ENCODE measurements at regions of chr1 and their contacts with region 1.

Region 1: DNA sequence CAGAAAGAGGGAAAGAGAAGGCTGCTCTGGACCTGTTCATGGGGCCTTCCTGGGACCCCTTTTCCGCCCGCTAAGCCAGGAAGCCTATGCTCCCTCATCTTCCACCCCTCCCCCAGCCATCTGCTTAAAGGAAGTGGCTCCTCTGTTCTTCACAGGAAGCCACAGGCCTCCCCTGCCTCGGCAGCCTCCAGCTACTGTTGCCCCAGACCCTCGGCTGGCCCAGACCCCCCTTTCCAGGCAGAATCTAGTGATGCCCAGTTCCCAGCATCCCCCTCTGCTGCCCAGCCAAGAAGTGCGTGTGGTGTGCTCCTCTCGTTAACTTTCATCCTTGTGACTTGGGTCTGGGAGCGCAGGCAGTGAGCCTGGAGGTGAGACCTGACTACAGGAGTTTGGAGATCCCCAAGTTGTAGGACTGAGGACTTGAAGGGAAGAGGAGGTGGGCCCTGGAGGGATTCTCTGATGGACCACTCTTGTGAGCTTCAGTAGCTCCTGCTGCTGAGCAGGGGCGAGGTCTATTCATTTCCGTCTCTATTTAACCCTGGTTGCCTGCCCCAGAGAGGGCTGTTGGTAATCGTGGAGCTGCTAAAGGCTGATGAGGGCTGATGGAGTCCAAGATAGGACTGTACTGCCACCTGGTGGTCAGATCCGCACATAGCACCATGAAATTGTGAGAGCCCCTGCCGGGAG is 9.1 kb downstream of the IFI6 start:
- DNase-seq: peak; percentile 86 to 95
- ATAC-seq: peak; percentile 85
- H3K4me3 ChIP-seq: no peak overlapping the region
- H3K27ac ChIP-seq: no peak overlapping the region
- H3K4me1 ChIP-seq: no peaks in the 10 kb centered on the region
- H3K27me3 ChIP-seq: no peaks in the 10 kb centered on the region

Region 2: DNA sequence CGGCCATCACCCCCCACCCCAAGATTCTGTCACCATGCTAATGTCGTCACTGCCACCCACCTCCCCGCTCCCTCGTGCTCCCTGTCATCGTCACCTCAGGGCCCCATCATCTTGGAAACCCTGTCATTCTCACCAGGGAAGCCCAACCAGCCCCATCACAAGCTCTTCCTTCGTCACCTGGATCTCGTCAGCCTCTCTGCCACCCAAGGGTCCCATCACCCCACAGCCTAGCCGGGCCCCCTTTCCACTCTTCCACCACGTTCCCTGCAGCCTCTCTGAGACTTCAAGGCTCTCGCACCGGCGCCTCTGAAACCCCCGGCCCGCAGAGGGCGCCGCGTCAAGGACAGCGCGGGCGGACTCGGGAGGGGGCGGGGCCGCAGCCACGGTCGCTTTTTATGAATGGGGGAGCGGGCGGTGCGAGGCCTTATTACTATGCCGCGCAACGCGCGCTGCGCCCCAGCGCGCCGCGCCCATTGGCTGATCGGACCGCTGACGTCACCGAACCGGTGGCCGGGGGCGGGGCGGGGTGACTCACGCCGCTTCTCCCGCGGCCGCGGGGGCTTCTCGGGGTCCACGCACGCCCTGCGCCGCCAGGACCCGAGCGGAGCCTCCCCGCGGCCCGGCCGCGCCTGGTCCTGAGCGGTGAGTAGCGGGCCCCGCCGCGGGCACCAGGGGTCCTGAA is 270.6 kb before region 1 on chr1 and contains the start of gene GPR3:
- intact Hi-C with region 1: loop called in 1 of 2 experiments (anchors 10 kb)
- DNase-seq: peak; percentile 92 to 97
- ATAC-seq: peak; percentile 93
- H3K4me3 ChIP-seq: no peak within 1 kb of the TSS
- H3K27ac ChIP-seq: no peak within 1 kb of the TSS
- H3K4me1 ChIP-seq: no peaks in the 10 kb centered on the region
- H3K27me3 ChIP-seq: no peaks in the 10 kb centered on the region
- total RNA-seq, gene GPR3: 0.68 to 0.93 TPM

Region 3: DNA sequence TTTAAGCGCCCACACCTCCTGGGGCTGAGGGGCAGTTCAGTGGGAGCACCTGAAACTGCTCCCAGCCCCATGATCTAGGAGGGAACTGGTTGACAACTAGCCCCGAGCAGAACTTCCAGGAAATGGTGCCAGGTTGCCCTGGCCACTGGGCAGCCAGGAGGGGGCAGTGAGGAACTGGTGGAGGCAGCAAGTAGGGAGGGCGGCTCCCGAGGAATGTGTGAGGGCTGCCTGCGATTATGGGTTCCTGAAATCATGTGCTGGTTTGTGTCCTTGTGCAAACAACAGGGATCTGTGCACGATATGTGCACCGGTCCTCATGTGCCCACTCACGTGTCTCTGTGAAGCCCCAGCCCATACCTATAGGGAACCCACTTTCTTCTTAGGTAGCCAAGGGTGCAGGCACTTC is 260.5 kb before region 1 on chr1:
- intact Hi-C with region 1: loop called (anchors 5 to 10 kb)
- DNase-seq: peak; percentile 87 to 92
- ATAC-seq: peak; percentile 74
- H3K4me3 ChIP-seq: no peak overlapping the region
- H3K27ac ChIP-seq: peak overlapping the region; percentile 49 to 71
- H3K4me1 ChIP-seq: no peaks in the 10 kb centered on the region
- H3K27me3 ChIP-seq: no peaks in the 10 kb centered on the region

Region 4: DNA sequence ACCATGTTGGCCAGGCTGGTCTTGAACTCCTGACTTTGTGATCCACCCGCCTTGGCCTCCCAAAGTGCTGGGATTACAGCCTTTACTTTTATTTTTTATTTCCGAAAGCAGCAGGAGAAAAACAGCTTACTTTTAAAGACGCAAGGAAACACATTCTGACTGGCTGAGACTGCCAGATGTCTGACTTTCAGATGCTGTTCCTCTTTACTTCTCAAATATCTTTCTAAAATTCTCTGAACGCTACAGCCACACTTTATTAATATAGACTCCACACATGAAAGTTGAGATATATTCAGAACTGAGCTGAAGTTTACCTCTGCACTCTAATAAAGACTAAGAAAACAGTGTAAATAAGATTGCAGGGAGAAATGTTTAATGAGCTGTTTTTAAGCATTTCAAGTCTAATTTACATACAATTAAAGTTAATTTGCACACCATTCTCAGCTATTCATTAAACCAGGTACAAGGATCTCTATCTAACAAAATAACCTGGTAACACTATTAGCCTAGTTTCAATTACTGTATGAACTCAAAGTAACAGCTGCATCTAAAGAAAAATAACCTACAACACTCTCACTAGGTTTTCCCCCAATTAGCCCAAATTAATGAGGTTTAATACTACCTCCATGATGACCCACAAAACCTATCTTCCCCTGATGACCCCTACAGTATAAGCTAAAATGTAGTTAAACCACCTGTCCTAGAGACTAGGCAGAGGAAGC is 197.8 kb before region 1 on chr1:
- intact Hi-C with region 1: no loop called
- DNase-seq: no peak
- ATAC-seq: no peak
- H3K4me3 ChIP-seq: no peak overlapping the region
- H3K27ac ChIP-seq: no peak overlapping the region
- H3K4me1 ChIP-seq: no peaks in the 10 kb centered on the region
- H3K27me3 ChIP-seq: no peaks in the 10 kb centered on the region

Region 5: DNA sequence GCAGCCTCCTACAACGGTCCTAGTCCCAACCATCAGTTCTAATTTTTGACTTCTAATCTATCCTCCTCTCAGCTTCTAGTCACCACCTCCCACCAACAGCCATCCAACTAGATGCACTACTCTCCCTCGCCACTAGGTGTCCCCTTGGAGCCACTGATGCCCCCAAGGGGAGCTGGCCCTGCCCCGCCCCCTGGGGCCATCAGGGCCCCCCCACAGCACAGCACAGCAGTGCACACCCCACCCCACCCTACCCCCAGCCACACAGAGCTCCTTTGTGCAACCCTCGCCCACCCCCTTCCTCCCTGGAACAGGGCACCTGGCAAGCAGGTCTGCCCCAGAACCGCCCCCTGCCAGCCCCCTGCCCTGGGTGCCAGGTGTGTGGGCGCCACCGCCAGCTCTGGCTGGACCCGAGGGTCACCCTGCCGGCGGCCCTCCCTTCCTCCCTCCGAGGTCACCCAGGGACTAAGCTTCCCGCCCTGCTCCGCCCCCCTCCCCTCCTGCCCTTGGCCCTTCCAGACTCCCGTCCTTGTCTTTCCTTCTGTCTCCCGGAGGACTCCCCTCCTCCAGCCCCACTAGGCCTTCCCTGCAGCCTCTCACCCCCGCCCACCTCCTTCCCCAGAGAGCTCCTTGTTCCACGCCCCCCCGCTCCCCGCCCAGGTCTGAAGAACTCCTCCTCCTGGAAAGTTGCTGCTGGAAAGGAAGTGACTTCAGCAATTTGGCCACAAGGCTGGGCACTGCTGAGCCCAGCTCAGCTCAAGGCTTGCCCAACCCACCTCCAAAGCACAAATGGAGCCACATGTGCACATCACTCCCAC is 105.9 kb before region 1 on chr1:
- intact Hi-C with region 1: loop called in 1 of 2 experiments (anchors 5 kb)
- DNase-seq: peak; percentile 98
- ATAC-seq: peak; percentile 82
- H3K4me3 ChIP-seq: no peak overlapping the region
- H3K27ac ChIP-seq: peak overlapping the region in 1 of 2 donors; percentile 48
- H3K4me1 ChIP-seq: peaks cover 0 to 4% of the 10 kb centered on the region in 2 donors
- H3K27me3 ChIP-seq: no peaks in the 10 kb centered on the region

Region 6: DNA sequence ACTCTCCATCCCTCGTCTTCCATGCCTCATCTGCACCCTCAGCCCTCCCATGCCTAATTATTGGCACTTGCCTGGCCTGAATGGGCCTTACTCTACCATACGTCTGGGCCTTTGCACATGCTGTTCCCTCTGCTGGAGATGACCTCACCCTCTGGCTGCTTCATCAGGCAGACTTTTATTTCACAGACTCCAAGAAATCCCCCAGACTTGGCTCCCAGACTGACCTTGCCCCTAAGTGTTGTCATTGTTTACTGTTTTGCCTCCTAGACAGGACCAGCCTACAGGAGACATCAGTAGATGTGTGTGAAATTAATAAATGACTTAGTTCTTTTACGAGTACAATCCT is 53.7 kb before region 1 on chr1:
- intact Hi-C with region 1: loop called (anchors 2 kb)
- DNase-seq: no peak
- ATAC-seq: no peak
- H3K4me3 ChIP-seq: no peak overlapping the region
- H3K27ac ChIP-seq: no peak overlapping the region
- H3K4me1 ChIP-seq: no peaks in the 10 kb centered on the region
- H3K27me3 ChIP-seq: no peaks in the 10 kb centered on the region

Region 7: GRCh38 chr1:27643701-27644625 is 18.9 kb before region 1 on chr1:
- intact Hi-C with region 1: loop called in 1 of 2 experiments (anchors 1 kb)
- DNase-seq: peak; percentile 73 to 84
- ATAC-seq: peak; percentile 78
- H3K4me3 ChIP-seq: no peak overlapping the region
- H3K27ac ChIP-seq: no peak overlapping the region
- H3K4me1 ChIP-seq: no peaks in the 10 kb centered on the region
- H3K27me3 ChIP-seq: no peaks in the 10 kb centered on the region

Region 8: DNA sequence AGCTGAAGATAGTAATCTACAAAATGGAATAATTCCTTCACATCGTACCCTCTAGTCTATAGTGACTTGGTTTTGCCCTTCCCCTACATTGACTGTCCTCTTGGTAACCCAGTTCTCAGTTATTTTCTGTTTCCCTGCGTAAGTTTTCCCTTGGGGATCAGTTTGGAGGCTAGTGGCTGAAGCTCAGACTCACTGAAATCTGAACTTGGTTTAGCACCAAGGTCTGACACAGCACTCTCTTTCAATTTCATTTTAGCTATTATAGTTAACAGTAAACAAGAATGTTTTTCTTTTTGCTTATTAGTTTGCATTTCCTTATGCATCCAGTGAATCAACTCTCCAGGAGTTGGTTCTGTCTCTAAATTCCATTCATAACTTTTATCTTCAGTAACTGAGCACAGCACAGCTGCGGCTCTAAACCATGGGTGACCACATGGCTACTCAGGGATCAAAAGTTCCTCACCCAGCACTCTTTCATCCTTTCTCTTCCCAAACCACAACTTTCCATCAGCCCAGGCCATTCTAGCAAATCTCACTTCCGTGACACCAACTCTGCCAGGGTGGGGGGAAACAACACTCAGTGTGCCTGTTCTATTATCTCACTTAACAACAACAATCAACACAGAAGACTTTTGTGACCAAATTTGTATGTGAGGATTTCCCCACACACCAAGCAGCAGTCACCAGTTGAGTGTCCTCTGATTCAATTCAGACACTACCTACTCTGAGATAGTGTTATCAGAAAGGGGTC is 26.7 kb after region 1 on chr1:
- intact Hi-C with region 1: no loop called
- DNase-seq: no peak
- ATAC-seq: no peak
- H3K4me3 ChIP-seq: no peak overlapping the region
- H3K27ac ChIP-seq: no peak overlapping the region
- H3K4me1 ChIP-seq: no peaks in the 10 kb centered on the region
- H3K27me3 ChIP-seq: no peaks in the 10 kb centered on the region

Measured in aorta (tissue), 5 donors.